MCF 10A (cell line): ENCODE measurements at regions of chrX and their contacts with region 1.

Region 1: DNA sequence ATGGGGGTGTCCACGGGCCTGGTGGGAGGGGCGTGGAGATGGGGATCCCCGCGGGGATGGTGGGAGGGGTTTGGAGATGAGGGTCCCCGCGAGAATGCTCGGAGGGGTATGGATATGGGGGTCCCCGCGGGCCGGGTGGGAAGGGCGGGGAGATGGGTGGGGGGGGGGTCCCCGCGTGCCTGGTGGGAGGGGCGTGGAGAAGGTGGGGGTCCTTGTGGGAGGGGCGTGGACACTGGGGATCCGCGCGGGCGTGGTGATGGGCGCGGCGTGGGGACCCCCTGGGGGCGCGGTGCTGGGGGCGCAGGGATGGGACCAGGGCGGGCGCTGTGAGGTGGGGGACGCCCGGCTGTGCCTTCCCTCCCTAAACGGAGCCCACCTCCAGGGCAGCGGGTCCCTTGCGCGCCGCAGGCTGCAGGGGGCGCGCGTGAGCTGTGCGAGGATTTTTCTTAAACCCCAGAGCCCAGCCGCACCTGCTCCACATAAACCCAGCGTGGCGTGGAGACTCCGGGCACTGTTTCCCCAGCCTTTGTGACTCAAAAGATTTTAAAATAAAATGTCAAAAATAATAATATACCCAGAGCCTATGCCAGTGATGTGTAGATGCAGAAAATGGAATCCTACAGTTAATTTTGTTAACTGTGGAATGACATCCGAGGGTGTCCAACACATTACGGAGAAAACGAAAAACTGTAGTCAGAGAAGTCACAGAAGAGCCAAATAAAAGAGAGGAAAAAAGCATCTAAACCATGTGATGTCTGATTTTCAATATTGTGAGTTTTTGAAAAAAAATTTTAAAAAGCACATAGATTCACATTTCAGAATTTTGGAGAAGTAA is 1.5 kb upstream of the ASMTL start:
- DNase-seq: peak; percentile 81
- H3K4me3 Mint-ChIP-seq: peak overlapping the region; percentile 33
- H3K27ac Mint-ChIP-seq: no peak overlapping the region
- H3K4me1 Mint-ChIP-seq: peaks cover 7% of the 10 kb centered on the region
- H3K27me3 Mint-ChIP-seq: no peaks in the 10 kb centered on the region
- CTCF ChIP-seq: peak; percentile 94

Region 2: DNA sequence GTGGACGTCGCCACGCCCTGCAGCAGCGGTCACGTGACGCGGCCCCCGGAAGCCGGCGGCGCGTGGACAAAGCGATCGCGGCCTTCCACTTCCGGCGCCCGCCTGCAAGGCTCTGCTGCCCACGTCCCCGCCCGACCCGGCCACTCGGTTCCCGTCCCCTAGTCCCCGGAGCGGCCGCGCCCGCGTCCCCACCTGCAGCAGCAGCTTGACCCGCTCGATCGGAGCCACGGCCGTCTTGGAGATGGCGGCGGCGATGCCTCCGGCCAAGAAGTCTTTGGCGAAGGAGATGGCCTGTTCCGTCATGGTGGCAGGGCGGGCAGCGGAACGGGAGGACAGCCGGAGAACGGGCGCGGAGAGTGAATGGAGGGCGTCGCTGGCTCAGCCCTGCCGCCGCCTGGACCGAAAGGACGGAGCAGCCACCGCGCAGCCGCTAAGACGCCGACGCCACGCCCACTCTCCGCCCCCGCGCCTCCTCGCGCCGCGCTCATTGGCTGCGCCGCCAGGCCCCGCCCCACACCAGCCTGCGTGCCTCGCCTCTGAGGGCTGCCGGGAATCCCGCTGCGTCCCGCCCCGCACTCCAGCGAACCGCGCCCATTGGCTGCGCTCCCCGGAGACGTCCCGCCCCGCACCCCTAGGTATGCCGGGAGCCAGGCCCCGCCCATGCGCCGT is 62.3 kb before region 1 on chrX and contains the start of gene SLC25A6:
- CTCF ChIA-PET with region 1: no interaction called
- POLR2A ChIA-PET with region 1: no interaction called
- intact Hi-C with region 1: loop called (anchors 2 kb)
- DNase-seq: peak; percentile 96
- H3K4me3 Mint-ChIP-seq: peak within 1 kb of the TSS; percentile 93
- H3K27ac Mint-ChIP-seq: peak within 1 kb of the TSS; percentile 96
- H3K4me1 Mint-ChIP-seq: peaks cover 27% of the 10 kb centered on the region
- H3K27me3 Mint-ChIP-seq: no peaks in the 10 kb centered on the region
- CTCF ChIP-seq: no peak
- total RNA-seq, gene SLC25A6: 319 and 463 TPM in 2 replicates

Region 3: GRCh38 chrX:1580735-1581531 is 126.8 kb after region 1 on chrX:
- CTCF ChIA-PET with region 1: no interaction called
- POLR2A ChIA-PET with region 1: no interaction called
- intact Hi-C with region 1: loop called (anchors 1 kb)
- DNase-seq: peak; percentile 73
- H3K4me3 Mint-ChIP-seq: no peak overlapping the region
- H3K27ac Mint-ChIP-seq: no peak overlapping the region
- H3K4me1 Mint-ChIP-seq: peaks cover 12% of the 10 kb centered on the region
- H3K27me3 Mint-ChIP-seq: no peaks in the 10 kb centered on the region
- CTCF ChIP-seq: peak; percentile 74

Region 4: GRCh38 chrX:1649621-1650020 is 195.5 kb after region 1 on chrX:
- CTCF ChIA-PET with region 1: no interaction called
- POLR2A ChIA-PET with region 1: no interaction called
- intact Hi-C with region 1: loop called (anchors 5 kb)
- DNase-seq: no peak
- H3K4me3 Mint-ChIP-seq: no peak overlapping the region
- H3K27ac Mint-ChIP-seq: no peak overlapping the region
- H3K4me1 Mint-ChIP-seq: no peaks in the 10 kb centered on the region
- H3K27me3 Mint-ChIP-seq: no peaks in the 10 kb centered on the region
- CTCF ChIP-seq: no peak

Region 5: DNA sequence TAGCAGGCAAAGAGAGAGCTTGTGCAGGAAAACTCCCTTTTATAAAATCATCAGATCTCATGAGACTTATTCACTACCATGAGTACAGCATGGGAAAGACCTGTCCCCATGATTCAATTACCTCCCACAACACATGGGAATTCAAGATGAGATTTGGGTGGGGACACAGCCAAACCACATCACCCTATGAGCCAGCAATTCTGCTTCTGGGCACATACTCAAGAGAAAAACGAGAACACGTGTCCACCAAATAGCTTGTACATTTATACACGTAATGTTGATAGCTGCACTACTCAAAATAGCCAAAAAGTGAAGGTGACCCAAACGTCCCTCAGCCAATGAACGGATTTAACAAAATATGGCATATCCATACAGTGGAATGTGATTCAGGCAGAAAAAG is 1141.1 kb after region 1 on chrX:
- CTCF ChIA-PET with region 1: no interaction called
- POLR2A ChIA-PET with region 1: no interaction called
- intact Hi-C with region 1: loop called (anchors 1 kb)
- DNase-seq: peak; percentile 44
- H3K4me3 Mint-ChIP-seq: no peak overlapping the region
- H3K27ac Mint-ChIP-seq: no peak overlapping the region
- H3K4me1 Mint-ChIP-seq: peaks cover 6% of the 10 kb centered on the region
- H3K27me3 Mint-ChIP-seq: no peaks in the 10 kb centered on the region
- CTCF ChIP-seq: no peak

Region 6: DNA sequence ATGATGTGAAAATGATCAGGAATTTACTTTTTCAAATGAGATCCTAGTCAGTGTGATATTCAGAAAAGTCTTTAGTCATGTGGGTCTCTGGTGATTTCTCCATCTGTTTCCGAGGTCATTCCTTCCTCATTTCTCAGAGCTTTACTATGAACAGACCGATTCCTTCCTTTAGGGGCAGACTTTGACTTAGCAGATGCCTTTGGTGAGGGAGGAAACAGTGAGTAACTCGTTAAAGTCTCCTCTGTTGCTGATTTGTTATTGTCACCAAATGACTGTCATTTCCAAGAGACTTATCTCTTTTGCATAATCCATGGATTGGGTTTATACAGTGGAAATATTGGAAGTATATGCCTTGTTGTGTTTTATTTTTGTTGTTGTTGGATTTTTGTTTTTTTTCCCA is 1160.7 kb after region 1 on chrX:
- CTCF ChIA-PET with region 1: no interaction called
- POLR2A ChIA-PET with region 1: no interaction called
- intact Hi-C with region 1: loop called (anchors 5 kb)
- DNase-seq: no peak
- H3K4me3 Mint-ChIP-seq: no peak overlapping the region
- H3K27ac Mint-ChIP-seq: peak overlapping the region; percentile 37
- H3K4me1 Mint-ChIP-seq: peaks cover 11% of the 10 kb centered on the region
- H3K27me3 Mint-ChIP-seq: no peaks in the 10 kb centered on the region
- CTCF ChIP-seq: no peak